Activated CD8-positive, alpha-beta memory T cell treated with anti-CD3 and anti-CD28 coated beads, Interleukin-2, amount 10 ng/mL, durations not matched to agents 7 days and 5 days (primary cell): ENCODE measurements at regions of chr3 and their contacts with region 1.

Region 1: DNA sequence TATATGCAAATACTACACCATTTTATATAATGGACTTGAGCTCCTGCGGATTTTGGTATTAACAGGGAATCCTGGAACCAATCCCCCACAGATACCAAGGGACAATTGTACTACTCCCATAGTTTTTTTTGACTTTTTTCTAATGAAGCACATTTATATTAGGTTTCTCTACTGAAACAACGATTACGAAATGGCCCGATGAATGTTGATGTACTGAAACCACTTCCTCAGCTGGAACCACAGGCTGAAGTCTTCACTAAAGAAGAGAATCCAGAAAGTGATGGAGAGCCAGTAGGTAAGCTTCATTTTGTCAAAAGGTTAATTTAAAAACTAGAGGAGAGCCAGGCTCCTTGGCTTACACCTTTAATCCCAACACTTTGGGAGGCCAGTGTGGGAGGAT is 121.5 kb upstream of the LRRFIP2 start:
- DNase-seq: no peak
- ATAC-seq: no peak
- H3K4me3 Mint-ChIP-seq: no peak overlapping the region
- H3K27ac Mint-ChIP-seq: no peak overlapping the region
- H3K4me1 Mint-ChIP-seq: peaks cover 24% of the 10 kb centered on the region
- H3K27me3 Mint-ChIP-seq: no peaks in the 10 kb centered on the region

Region 2: GRCh38 chr3:36763850-36764703 is 531.8 kb before region 1 on chr3 and contains the start of gene DCLK3:
- CTCF ChIA-PET with region 1: no interaction called
- DNase-seq: no peak
- ATAC-seq: peak; percentile 23
- H3K4me3 Mint-ChIP-seq: no peak within 1 kb of the TSS
- H3K27ac Mint-ChIP-seq: no peak within 1 kb of the TSS
- H3K4me1 Mint-ChIP-seq: peaks cover 4% of the 10 kb centered on the region
- H3K27me3 Mint-ChIP-seq: peaks cover 78% of the 10 kb centered on the region
- total RNA-seq, gene DCLK3: not detected

Region 3: GRCh38 chr3:37256447-37256846 is 39.5 kb before region 1 on chr3:
- CTCF ChIA-PET with region 1: no interaction called
- DNase-seq: no peak
- ATAC-seq: peak; percentile 49
- H3K4me3 Mint-ChIP-seq: no peak overlapping the region
- H3K27ac Mint-ChIP-seq: no peak overlapping the region
- H3K4me1 Mint-ChIP-seq: peaks cover 15% of the 10 kb centered on the region
- H3K27me3 Mint-ChIP-seq: no peaks in the 10 kb centered on the region

Region 4: GRCh38 chr3:37308247-37308646 is 12.3 kb after region 1 on chr3:
- CTCF ChIA-PET with region 1: interaction called, 11 read pairs
- DNase-seq: no peak
- ATAC-seq: no peak
- H3K4me3 Mint-ChIP-seq: no peak overlapping the region
- H3K27ac Mint-ChIP-seq: no peak overlapping the region
- H3K4me1 Mint-ChIP-seq: peaks cover 8% of the 10 kb centered on the region
- H3K27me3 Mint-ChIP-seq: no peaks in the 10 kb centered on the region

Region 5: GRCh38 chr3:37423825-37424224 is 127.9 kb after region 1 on chr3:
- CTCF ChIA-PET with region 1: no interaction called
- DNase-seq: no peak
- ATAC-seq: no peak
- H3K4me3 Mint-ChIP-seq: no peak overlapping the region
- H3K27ac Mint-ChIP-seq: no peak overlapping the region
- H3K4me1 Mint-ChIP-seq: no peaks in the 10 kb centered on the region
- H3K27me3 Mint-ChIP-seq: no peaks in the 10 kb centered on the region